Adrenal gland (tissue), 19 donors: ENCODE measurements at regions of chr19 and their contacts with region 1.

Region 1: GRCh38 chr19:11446652-11447301 is 11.3 kb downstream of the PRKCSH start:
- DNase-seq: peak; percentile 54 to 71 (median 69)
- H3K4me3 ChIP-seq: no peak overlapping the region
- H3K27ac ChIP-seq: no peak overlapping the region
- H3K4me1 ChIP-seq: no peaks in the 10 kb centered on the region
- H3K27me3 ChIP-seq: no peaks in the 10 kb centered on the region
- CTCF ChIP-seq: peak; percentile 81 to 96 (median 90)
- POLR2A ChIP-seq: no peak

Region 2: DNA sequence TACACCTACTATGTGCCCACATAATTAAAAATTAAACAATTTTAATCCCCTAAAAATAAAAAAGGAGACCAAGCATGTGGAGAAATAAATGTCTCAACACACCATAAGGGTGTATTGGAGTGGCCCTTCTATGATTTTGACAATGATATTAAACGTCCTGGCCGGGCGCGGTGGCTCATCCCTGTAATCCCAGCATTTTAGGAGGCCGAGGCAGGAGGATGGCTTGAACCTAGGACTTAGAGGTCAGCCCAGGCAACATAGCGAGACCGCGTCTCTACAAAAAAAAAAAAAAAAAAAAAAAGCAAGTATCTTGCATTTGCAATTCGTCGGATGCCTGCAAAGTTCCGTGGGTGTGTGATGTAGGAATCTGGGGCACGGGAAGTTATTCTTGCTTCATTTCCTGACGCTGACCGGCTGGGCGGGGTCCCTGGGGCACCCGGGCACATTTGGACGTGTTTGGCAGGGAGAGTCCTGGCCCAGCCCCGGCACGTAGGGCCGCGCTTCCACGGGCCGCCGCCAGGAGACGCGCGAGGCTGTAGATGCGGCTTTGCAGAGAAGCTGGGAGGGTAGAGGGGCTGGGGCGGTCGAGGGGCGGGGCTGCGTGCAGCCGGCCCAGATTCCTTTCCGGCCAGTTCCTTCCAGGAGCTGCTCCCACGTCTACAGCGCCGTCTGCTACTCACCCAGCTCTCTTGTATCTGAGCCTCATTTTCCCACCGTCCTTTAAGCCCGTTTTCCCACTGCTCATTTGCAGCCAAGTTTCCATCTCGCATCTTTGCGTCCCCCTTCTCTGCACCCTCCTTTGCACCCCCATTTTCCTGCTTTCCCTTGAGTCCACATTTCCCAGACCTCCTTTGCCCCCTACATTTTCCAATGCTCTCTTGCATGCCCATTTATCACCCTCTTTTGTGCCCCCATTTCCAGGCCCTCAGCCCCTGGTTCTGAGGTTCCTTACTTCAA is 153.1 kb before region 1 on chr19:
- intact Hi-C with region 1: loop called (anchors 5 to 10 kb)
- DNase-seq: peak; percentile 94 to 98 (median 95)
- H3K4me3 ChIP-seq: peak overlapping the region in 1 of 4 donors; percentile 5
- H3K27ac ChIP-seq: peak overlapping the region in 1 of 5 donors; percentile 21
- H3K4me1 ChIP-seq: peaks cover 0 to 9% of the 10 kb centered on the region in 2 donors
- H3K27me3 ChIP-seq: no peaks in the 10 kb centered on the region
- CTCF ChIP-seq: peak; percentile 95 to 99 (median 98)
- POLR2A ChIP-seq: no peak

Region 3: GRCh38 chr19:11361037-11361770 is 85.6 kb before region 1 on chr19:
- intact Hi-C with region 1: no loop called
- DNase-seq: peak in 6 of 7 donors; percentile 43 to 83 (median 72)
- H3K4me3 ChIP-seq: no peak overlapping the region
- H3K27ac ChIP-seq: no peak overlapping the region
- H3K4me1 ChIP-seq: peaks cover 2 to 5% of the 10 kb centered on the region in 2 donors
- H3K27me3 ChIP-seq: no peaks in the 10 kb centered on the region
- CTCF ChIP-seq: no peak
- POLR2A ChIP-seq: no peak